ENCODE measurements at regions of chr4 and their contacts with region 1.

Region 1: DNA sequence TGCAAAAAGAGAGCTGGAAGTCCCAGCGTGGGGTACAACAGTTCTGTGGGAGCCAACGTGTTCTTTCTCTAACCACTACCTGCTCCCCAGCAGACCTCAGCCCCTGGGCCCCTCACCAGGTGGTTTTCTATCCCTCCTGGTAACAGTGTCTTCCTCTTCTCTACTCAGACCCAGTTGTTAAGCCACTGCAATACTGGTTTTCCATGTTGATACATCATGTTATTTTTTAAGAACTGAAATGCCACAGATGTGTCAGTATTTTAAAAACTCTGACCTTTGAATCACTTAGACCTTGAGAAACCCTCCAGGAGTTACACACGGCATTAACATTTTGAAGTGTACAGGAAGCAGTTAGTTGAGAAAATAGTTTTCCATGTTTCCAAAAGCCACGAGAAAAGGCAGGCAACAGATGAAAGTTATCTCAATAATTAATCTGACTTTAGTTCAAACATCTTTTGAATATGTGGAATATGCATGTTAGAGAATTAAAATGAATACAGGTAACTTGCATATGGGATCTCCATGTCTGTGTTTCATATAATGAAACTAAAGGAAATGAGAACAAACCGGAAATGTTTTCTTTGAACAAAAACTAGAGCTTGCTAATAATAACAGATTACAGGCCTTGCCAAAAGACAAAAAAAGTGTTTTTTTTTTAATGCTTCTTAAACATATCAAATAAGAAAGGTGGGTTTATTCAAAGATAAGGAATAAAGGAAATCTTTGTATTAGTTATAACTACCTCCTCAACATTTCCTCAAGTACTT is 108.8 kb downstream of the ZNF827 start:
- DNase-seq: peak in 2 of 9 experiments; percentile 12 to 25
- ATAC-seq: peak; percentile 54
- H3K4me3 ChIP-seq: no peak overlapping the region
- H3K4me3 Mint-ChIP-seq: peak overlapping the region; percentile 75
- H3K27ac ChIP-seq: peak overlapping the region in 1 of 2 experiments; percentile 3
- H3K27ac Mint-ChIP-seq: peak overlapping the region; percentile 90
- H3K4me1 ChIP-seq: peaks cover 16% of the 10 kb centered on the region
- H3K4me1 Mint-ChIP-seq: peaks cover 36% of the 10 kb centered on the region
- H3K27me3 ChIP-seq: no peaks in the 10 kb centered on the region
- H3K27me3 Mint-ChIP-seq: no peaks in the 10 kb centered on the region
- CTCF ChIP-seq: no peak

Region 2: GRCh38 chr4:145779319-145779801 is 50.5 kb before region 1 on chr4:
- CTCF ChIA-PET with region 1: no interaction called
- POLR2A ChIA-PET with region 1: no interaction called
- intact Hi-C with region 1: no loop called
- DNase-seq: no peak
- ATAC-seq: no peak
- H3K4me3 ChIP-seq: no peak overlapping the region
- H3K4me3 Mint-ChIP-seq: no peak overlapping the region
- H3K27ac ChIP-seq: no peak overlapping the region
- H3K27ac Mint-ChIP-seq: no peak overlapping the region
- H3K4me1 ChIP-seq: no peaks in the 10 kb centered on the region
- H3K4me1 Mint-ChIP-seq: peaks cover 2% of the 10 kb centered on the region
- H3K27me3 ChIP-seq: no peaks in the 10 kb centered on the region
- H3K27me3 Mint-ChIP-seq: no peaks in the 10 kb centered on the region
- CTCF ChIP-seq: no peak

Region 3: DNA sequence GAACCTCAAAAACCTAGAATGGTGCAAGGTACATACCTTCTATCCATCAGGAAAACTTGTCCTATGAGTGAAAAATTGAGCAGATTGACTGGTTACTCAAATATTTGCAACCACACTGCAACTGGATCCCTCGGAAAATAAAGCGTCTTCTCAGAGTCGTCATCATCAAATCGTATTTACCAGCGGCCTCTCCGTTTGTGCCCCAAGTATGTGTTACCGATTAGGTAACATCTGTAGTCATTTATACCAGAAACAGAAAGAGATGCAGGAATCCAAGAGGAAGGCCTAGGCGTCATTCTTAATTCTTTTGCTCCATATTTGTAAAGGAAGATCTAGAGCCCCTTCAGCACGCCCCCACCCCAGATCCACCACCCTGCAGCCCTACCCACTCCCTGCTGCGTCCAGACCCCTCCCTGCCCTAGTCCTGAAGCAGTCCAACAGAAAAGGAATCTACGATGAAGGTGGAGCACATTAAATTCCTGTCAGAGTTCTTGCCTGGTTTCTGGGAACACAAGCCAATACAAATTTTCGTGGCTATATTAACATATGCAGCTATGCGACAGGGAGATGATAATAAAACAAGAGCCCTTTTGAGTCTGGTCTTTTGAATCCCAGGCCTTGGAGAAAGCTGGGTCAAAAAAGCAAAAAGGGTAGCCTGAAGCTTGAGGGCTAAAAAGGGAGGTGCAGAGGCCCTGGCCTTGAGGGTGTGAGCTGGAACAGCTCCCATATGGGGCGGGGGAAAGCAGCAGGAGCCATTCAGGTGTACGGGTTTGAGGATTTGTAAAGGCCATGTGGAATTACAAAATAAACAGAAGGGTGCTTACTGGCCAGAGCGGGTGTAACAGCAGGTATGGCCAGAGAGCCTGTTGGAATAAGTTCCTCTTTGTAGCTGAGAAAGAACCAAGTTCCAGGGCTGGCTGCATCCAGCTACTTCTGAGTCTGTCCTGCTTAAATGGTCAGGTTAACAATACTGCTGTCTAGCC is 31.8 kb after region 1 on chr4:
- CTCF ChIA-PET with region 1: no interaction called
- POLR2A ChIA-PET with region 1: interaction called, 3 read pairs
- intact Hi-C with region 1: loop called in 1 of 2 experiments (anchors 5 kb)
- DNase-seq: no peak
- ATAC-seq: no peak
- H3K4me3 ChIP-seq: no peak overlapping the region
- H3K4me3 Mint-ChIP-seq: no peak overlapping the region
- H3K27ac ChIP-seq: no peak overlapping the region
- H3K27ac Mint-ChIP-seq: no peak overlapping the region
- H3K4me1 ChIP-seq: no peaks in the 10 kb centered on the region
- H3K4me1 Mint-ChIP-seq: peaks cover 12% of the 10 kb centered on the region
- H3K27me3 ChIP-seq: no peaks in the 10 kb centered on the region
- H3K27me3 Mint-ChIP-seq: no peaks in the 10 kb centered on the region
- CTCF ChIP-seq: no peak

Measured in CD8-positive, alpha-beta T cell (primary cell).